ENCODE measurements at regions of chr20 and their contacts with region 1.

Region 1: DNA sequence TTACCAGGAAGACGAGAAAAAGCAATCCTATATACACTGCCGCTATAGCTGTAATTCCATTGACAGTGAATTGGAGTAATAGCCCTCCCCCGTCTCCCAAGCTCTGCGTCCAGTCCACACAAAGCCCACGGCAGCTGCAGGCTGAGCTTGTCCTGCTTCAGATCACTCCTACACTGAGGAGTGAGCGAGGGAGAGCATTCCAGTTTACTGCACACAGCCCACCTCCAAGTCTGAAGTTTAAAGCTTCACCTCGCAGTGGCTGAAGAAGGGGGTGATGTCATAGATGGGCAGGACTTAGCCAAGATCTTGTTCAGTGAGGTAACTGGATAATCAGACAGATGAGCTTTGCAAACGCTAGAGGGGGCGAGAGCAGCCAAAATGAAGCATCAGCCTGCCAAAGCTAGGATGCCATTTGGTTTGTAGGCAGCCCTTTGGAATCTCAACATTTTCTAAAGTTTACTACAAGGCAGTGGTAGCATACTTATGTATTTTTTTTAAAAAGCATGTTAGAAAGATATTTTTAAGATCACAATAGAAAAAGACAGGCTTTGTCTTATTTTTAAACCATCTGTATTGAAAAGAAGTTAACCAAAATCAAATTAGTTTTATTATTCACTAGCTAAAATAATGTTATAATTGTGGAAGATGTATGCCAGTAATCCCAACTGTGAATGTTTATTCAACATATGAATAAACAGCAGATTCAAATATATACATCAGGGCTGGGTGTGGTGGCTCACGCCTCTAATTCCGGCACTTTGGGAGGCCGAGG is at the start of gene FLRT3:
- DNase-seq: peak; percentile 96
- H3K4me3 ChIP-seq: peak within 1 kb of the TSS; percentile 63
- H3K27ac ChIP-seq: peak within 1 kb of the TSS; percentile 43
- H3K27me3 ChIP-seq: no peaks in the 10 kb centered on the region
- CTCF ChIP-seq: peak; percentile 87
- polyA plus RNA-seq, gene FLRT3: 2.2 and 3.0 TPM in 2 replicates

Region 2: DNA sequence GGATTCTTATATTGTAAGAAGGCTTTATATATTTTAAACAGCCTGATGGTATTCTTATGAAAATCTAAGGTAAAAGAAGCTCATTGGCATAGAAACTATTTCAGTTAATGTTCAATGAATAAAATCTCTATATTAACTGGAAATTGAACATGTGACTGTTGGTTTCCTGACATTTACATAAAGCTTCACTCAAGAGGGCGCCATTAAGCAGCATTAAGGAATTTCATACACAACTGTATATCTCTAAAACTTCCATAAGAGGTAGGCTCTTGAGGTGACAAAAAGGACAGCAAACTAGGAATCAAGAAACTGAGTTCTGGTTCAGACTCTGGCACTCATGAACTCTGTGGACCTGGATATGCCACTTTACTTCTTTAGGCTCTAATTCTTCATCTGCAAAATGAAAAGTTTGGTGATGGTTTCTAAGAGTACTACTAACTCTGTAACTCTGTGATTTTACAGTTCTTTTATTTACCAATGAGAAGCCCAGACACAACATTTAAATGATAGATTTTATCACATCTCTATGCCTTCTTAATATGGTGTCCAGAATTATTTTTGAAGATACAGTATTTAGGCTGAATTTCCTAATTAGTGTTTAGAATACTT is 147.7 kb before region 1 on chr20:
- CTCF ChIA-PET with region 1: interaction called, 11 read pairs
- POLR2A ChIA-PET with region 1: no interaction called
- DNase-seq: peak; percentile 26
- H3K4me3 ChIP-seq: no peak overlapping the region
- H3K27ac ChIP-seq: no peak overlapping the region
- H3K27me3 ChIP-seq: no peaks in the 10 kb centered on the region
- CTCF ChIP-seq: peak; percentile 67

Region 3: GRCh38 chr20:14307956-14308355 is 29.6 kb before region 1 on chr20:
- CTCF ChIA-PET with region 1: no interaction called
- POLR2A ChIA-PET with region 1: no interaction called
- DNase-seq: no peak
- H3K4me3 ChIP-seq: no peak overlapping the region
- H3K27ac ChIP-seq: no peak overlapping the region
- H3K27me3 ChIP-seq: no peaks in the 10 kb centered on the region
- CTCF ChIP-seq: no peak

Region 4: DNA sequence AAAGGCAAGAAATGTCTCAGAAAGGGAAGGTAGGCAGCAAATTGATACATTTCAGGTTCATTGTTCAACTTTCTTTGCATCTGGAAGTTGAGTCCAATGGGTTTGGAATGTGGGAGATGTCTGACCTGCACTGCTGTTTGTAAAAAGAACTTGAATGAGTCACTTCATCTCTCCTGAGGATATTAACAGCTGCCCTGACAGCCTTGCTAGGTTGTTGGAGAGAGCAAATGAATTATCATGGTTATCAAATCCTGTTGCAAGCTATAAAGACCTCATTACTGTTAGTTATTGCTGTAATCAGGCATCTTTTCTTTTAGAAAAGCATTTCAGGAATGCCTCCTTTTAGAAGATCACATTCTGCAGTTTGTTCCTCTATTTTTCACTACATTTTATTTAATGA is 22.8 kb after region 1 on chr20:
- CTCF ChIA-PET with region 1: interaction called, 10 read pairs
- POLR2A ChIA-PET with region 1: no interaction called
- DNase-seq: no peak
- H3K4me3 ChIP-seq: no peak overlapping the region
- H3K27ac ChIP-seq: no peak overlapping the region
- H3K27me3 ChIP-seq: no peaks in the 10 kb centered on the region
- CTCF ChIP-seq: no peak

Region 5: DNA sequence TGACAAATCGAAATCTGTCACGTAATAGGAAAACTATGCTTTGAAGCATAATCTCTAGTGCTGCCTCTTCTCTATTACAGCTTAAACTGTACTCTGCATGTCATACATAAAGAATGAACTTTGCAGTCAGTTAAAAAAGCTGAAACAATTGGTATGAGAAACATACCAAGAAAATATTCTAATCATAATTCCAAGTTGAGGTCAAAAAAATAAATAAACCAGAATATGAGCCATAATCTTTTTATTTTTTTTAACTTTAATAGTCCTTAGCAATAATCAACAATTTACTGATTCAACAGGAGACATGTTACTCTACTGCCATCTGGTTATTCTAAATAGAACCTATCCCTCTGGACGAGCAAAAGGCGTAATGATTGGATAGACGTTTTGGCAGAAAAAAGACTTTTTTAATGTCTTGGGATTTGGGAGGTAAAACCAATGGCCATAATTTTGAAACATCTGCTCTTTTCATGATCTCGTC is 224.2 kb after region 1 on chr20:
- CTCF ChIA-PET with region 1: interaction called, 72 read pairs
- POLR2A ChIA-PET with region 1: interaction called, 10 read pairs
- DNase-seq: peak; percentile 27
- H3K4me3 ChIP-seq: no peak overlapping the region
- H3K27ac ChIP-seq: no peak overlapping the region
- H3K27me3 ChIP-seq: no peaks in the 10 kb centered on the region
- CTCF ChIP-seq: peak; percentile 43

Region 6: DNA sequence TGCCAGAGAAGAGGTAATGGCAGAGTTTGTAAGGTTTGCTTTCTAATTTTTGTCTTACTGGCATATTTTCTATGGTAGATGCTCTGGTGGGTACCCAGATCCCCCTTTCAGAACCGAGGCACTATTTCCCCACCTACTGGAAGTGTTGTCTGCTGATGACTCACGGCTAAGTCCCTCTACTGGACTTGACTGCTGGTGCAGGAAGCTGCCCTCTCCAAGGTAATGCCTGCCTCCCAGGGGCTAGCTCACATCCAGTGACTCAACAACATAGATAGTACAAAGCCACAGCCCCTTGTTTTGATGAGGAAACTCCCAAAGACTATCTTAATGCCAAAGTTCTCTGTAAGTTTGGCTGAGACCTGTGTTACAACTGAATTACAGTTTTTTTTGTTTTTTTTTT is 285.2 kb after region 1 on chr20:
- CTCF ChIA-PET with region 1: interaction called, 10 read pairs
- POLR2A ChIA-PET with region 1: no interaction called
- DNase-seq: no peak
- H3K4me3 ChIP-seq: no peak overlapping the region
- H3K27ac ChIP-seq: no peak overlapping the region
- H3K27me3 ChIP-seq: no peaks in the 10 kb centered on the region
- CTCF ChIP-seq: peak; percentile 26